Esophagus muscularis mucosa (tissue), 4 donors: ENCODE measurements at regions of chr4 and their contacts with region 1.

Region 1: DNA sequence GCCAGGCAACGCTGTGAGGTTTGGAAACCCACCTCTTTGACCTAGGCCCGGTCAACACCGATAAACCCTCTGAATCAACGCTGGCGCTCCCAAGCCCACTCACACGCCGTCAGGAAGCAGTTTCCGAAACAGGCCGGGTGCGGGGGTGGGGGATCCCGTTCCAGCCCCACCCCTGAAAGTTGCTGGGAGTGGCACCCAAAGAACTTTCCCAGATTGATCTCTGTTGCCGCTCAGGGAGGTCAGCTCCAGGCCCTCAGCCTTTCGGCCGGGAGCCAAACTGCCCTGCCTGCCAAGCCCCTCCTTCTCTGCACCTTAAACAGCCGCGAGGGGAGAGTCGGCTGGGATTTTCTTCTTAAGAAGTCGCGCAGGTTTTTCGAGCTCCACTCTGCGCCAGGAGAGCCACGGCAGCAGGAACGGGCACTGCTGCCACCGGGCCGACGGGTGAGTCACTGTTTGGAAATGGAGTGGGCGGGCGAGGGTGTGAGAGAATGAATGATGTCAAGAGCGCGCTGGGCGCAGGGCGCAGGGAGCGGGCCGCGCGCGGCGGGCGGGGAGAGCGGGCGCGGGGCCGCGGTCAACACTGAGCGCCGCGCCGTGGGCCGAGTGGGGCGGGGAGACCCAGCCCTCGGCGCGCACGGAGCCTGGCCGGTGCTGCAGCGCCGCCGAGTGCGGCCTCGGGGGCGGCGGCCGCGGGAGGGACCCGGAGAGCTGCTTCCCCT is at the start of gene SGMS2:
- DNase-seq: peak; percentile 97
- H3K4me3 ChIP-seq: peak within 1 kb of the TSS; percentile 86 to 97 (median 96)
- H3K27ac ChIP-seq: peak within 1 kb of the TSS; percentile 96 to 99 (median 96)
- H3K4me1 ChIP-seq: peaks cover 5 to 49% (median 42%) of the 10 kb centered on the region in 4 donors
- H3K27me3 ChIP-seq: no peaks in the 10 kb centered on the region
- CTCF ChIP-seq: no peak
- EP300 ChIP-seq: no peak
- POLR2A ChIP-seq: no peak
- total RNA-seq, gene SGMS2: 278 to 487 (median 347) TPM

Region 2: GRCh38 chr4:107719922-107720722 is 104.4 kb before region 1 on chr4 and contains the start of gene PAPSS1:
- intact Hi-C with region 1: no loop called
- DNase-seq: peak; percentile 98
- H3K4me3 ChIP-seq: peak within 1 kb of the TSS; percentile 79 to 97 (median 90)
- H3K27ac ChIP-seq: peak within 1 kb of the TSS; percentile 87 to 93 (median 88)
- H3K4me1 ChIP-seq: peaks cover 14 to 20% (median 20%) of the 10 kb centered on the region in 4 donors
- H3K27me3 ChIP-seq: no peaks in the 10 kb centered on the region
- CTCF ChIP-seq: no peak
- EP300 ChIP-seq: no peak
- POLR2A ChIP-seq: peak; percentile 39
- total RNA-seq, gene PAPSS1: 11.6 to 24.4 (median 18.1) TPM

Region 3: GRCh38 chr4:107906458-107907100 is 82.1 kb after region 1 on chr4:
- intact Hi-C with region 1: loop called (anchors 5 kb)
- DNase-seq: no peak
- H3K4me3 ChIP-seq: no peak overlapping the region
- H3K27ac ChIP-seq: no peak overlapping the region
- H3K4me1 ChIP-seq: peaks cover 5 to 25% (median 18%) of the 10 kb centered on the region in 4 donors
- H3K27me3 ChIP-seq: no peaks in the 10 kb centered on the region
- CTCF ChIP-seq: no peak
- EP300 ChIP-seq: no peak
- POLR2A ChIP-seq: no peak

Region 4: GRCh38 chr4:108003982-108004515 is 179.5 kb after region 1 on chr4:
- intact Hi-C with region 1: no loop called
- DNase-seq: no peak
- H3K4me3 ChIP-seq: no peak overlapping the region
- H3K27ac ChIP-seq: no peak overlapping the region
- H3K4me1 ChIP-seq: peaks cover 24 to 56% (median 35%) of the 10 kb centered on the region in 4 donors
- H3K27me3 ChIP-seq: no peaks in the 10 kb centered on the region
- CTCF ChIP-seq: no peak
- EP300 ChIP-seq: no peak
- POLR2A ChIP-seq: no peak